Colonic mucosa (tissue), 4 donors: ENCODE measurements at regions of chr1 and their contacts with region 1.

Region 1: DNA sequence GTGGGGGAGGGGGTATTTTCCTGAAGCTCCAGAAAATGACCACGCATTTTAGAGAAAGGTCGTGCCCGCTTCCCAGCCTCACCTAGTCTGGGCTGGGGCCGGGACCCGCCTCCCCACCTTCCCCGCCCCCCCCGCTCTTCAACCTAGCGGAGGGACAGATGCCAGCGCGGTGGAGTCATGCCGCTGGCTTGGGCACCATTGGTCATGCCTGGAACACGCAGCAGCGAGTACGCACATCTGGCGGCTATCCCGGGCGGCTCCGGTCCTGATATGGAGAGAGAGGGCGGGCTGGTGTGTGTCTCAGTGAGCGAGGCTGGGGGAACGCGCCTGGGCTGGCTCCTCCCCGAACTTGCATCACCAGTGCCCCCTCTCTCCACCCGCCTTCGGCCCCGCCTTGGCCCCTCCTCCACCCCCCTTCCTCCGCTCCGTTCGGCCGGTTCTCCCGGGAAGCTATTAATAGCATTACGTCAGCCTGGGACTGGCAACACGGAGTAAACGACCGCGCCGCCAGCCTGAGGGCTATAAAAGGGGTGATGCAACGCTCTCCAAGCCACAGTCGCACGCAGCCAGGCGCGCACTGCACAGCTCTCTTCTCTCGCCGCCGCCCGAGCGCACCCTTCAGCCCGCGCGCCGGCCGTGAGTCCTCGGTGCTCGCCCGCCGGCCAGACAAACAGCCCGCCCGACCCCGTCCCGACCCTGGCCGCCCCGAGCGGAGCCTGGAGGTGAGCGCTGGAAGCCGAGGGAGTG is at the start of gene ATF3:
- DNase-seq: peak; percentile 99
- H3K4me3 ChIP-seq: peak within 1 kb of the TSS; percentile 71
- H3K27ac ChIP-seq: peak within 1 kb of the TSS; percentile 91
- H3K4me1 ChIP-seq: no peaks in the 10 kb centered on the region
- H3K27me3 ChIP-seq: no peaks in the 10 kb centered on the region
- CTCF ChIP-seq: no peak
- total RNA-seq, gene ATF3: 17.7 to 34.0 TPM

Region 2: GRCh38 chr1:212477014-212477679 is 131.2 kb before region 1 on chr1:
- intact Hi-C with region 1: loop called (anchors 2 kb)
- DNase-seq: peak; percentile 92
- H3K4me3 ChIP-seq: no peak overlapping the region
- H3K27ac ChIP-seq: peak overlapping the region; percentile 69
- H3K4me1 ChIP-seq: no peaks in the 10 kb centered on the region
- H3K27me3 ChIP-seq: no peaks in the 10 kb centered on the region
- CTCF ChIP-seq: peak; percentile 81

Region 3: DNA sequence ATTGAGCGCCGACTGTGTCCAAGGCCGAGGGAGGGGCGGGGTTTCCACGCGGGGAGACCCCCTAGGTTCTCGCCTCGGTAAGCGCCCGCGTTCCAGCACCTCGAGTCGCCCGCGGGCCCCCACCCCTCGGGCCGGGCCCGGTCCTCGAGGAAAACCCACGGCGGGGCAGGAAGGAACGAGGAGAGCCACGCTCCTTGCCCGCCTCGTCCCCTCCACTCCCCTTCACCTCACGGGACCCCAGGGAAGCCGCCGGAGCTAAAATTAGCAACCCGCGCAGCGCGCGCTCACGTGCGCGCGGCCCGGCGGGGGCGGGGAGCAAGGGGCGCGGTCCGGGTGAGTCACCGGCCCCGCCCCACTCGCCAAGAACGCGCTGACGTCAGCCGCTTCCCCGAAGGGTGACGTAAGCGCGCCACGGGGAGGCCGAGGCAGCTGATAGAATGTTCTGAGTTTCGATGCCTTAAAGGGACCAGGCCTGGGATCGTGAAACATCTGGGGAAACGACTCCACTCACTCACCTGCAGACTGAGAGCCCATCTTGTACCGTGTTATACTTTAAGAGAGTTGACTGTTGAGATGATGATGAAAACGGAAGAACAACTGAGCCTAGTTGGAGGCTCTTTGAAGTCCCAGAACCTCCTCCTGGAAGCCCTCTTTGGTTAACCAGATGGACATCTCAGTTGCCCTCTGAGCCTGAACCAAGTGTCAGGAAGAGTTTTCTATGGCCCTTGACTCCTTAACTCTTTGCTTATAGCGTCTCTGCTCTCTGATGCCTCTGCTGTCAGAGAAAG is 49.5 kb before region 1 on chr1:
- intact Hi-C with region 1: loop called (anchors 5 kb)
- DNase-seq: peak; percentile 93
- H3K4me3 ChIP-seq: peak overlapping the region; percentile 61
- H3K27ac ChIP-seq: peak overlapping the region; percentile 82
- H3K4me1 ChIP-seq: no peaks in the 10 kb centered on the region
- H3K27me3 ChIP-seq: no peaks in the 10 kb centered on the region
- CTCF ChIP-seq: no peak

Region 4: DNA sequence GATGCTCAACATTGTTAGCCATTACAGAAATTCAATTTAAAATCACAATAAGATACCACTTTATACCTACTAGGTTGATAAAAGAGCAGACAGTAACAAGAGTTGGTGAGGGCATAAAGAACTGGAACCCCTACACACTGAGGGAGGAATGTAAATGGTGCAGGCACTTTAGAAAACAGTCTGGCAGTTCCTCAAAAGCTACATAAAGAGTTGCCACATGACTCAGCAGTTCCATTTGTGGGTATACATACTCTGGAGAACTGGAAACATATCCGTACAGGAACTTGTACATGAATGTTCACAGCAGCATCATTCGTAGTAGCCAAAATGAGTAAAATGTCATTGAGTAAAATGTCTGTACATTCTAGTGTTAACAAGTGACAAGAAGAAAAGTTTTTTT is 166.2 kb after region 1 on chr1:
- intact Hi-C with region 1: no loop called
- DNase-seq: no peak
- H3K4me3 ChIP-seq: no peak overlapping the region
- H3K27ac ChIP-seq: no peak overlapping the region
- H3K4me1 ChIP-seq: no peaks in the 10 kb centered on the region
- H3K27me3 ChIP-seq: no peaks in the 10 kb centered on the region
- CTCF ChIP-seq: no peak